PC-9 (cell line): ENCODE measurements at regions of chr2 and their contacts with region 1.

Region 1: GRCh38 chr2:109448946-109449788 is 164.6 kb downstream of the SEPTIN10 start:
- DNase-seq: peak in 1 of 2 experiments; percentile 30
- H3K4me3 ChIP-seq: no peak overlapping the region
- H3K27ac ChIP-seq: no peak overlapping the region
- H3K4me1 ChIP-seq: no peaks in the 10 kb centered on the region
- H3K27me3 ChIP-seq: no peaks in the 10 kb centered on the region
- CTCF ChIP-seq: no peak

Region 2: GRCh38 chr2:109382951-109383350 is 66.2 kb before region 1 on chr2:
- CTCF ChIA-PET with region 1: no interaction called
- POLR2A ChIA-PET with region 1: no interaction called
- intact Hi-C with region 1: loop called (anchors 2 kb)
- DNase-seq: peak in 1 of 2 experiments; percentile 68
- H3K4me3 ChIP-seq: no peak overlapping the region
- H3K27ac ChIP-seq: no peak overlapping the region
- H3K4me1 ChIP-seq: no peaks in the 10 kb centered on the region
- H3K27me3 ChIP-seq: no peaks in the 10 kb centered on the region
- CTCF ChIP-seq: no peak

Region 3: DNA sequence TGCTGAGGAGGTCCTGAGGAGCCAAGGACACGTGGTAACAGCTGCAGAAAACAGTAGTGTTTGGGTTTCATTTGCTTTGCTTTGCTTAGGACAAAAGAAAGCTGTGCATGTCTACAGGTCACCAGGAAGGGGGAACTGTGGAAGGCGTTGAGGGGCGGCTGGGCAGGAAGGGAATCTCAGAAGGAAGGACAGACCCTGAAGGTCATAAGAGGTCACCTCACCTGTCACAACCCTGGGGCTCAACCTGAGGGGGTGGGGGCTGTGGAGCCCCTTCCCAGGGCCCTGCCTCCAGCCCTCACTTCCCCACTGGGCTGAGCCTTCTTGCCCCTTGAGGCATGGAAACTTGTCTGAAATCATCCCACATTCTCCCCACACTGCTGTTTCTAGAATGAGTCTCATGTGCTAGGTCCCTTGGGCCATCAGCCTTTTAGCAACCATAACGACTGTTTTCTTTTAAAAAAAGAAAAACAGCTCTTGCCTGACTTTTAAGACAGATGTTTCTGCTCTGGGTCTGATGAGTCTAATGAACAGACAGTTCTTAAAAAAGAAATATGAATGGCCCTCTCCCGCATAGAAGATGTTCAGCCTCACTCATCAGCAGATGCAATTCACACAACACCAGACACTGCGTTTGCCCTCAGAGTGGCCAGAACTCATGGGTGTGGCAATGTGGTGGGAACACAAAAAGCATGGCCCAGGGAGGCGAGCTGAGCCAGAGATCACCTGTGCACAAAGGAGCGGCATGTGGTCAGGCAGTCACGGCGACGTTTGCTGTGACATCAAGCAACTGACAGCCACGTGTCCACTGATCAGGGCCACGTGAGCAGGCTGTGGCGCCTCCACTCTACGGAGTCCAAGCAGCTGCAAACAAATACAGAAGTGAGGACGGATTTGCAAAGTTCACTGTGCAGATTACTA is 80.6 kb after region 1 on chr2:
- CTCF ChIA-PET with region 1: no interaction called
- POLR2A ChIA-PET with region 1: no interaction called
- intact Hi-C with region 1: no loop called
- DNase-seq: no peak
- H3K4me3 ChIP-seq: no peak overlapping the region
- H3K27ac ChIP-seq: no peak overlapping the region
- H3K4me1 ChIP-seq: no peaks in the 10 kb centered on the region
- H3K27me3 ChIP-seq: no peaks in the 10 kb centered on the region
- CTCF ChIP-seq: no peak